KBM-7 (cell line): ENCODE measurements at regions of chr5 and their contacts with region 1.

Region 1: GRCh38 chr5:35644543-35644942 is 26.9 kb downstream of the SPEF2 start:
- DNase-seq: no peak

Region 2: GRCh38 chr5:35926389-35927051 is 282.0 kb after region 1 on chr5:
- in situ Hi-C with region 1: loop called (anchors 25 kb)
- DNase-seq: peak; percentile 86